ENCODE measurements at regions of chr7 and their contacts with region 1.

Region 1: GRCh38 chr7:26043801-26044200 is 108.2 kb upstream of the NFE2L3 start:
- DNase-seq: no peak
- ATAC-seq: no peak
- H3K4me3 ChIP-seq: no peak overlapping the region
- H3K4me3 Mint-ChIP-seq: no peak overlapping the region
- H3K27ac ChIP-seq: no peak overlapping the region
- H3K27ac Mint-ChIP-seq: no peak overlapping the region
- H3K4me1 ChIP-seq: no peaks in the 10 kb centered on the region
- H3K4me1 Mint-ChIP-seq: no peaks in the 10 kb centered on the region
- H3K27me3 ChIP-seq: peaks cover 8 to 10% of the 10 kb centered on the region in 2 experiments
- H3K27me3 Mint-ChIP-seq: peaks cover 25% of the 10 kb centered on the region
- CTCF ChIP-seq: no peak

Region 2: DNA sequence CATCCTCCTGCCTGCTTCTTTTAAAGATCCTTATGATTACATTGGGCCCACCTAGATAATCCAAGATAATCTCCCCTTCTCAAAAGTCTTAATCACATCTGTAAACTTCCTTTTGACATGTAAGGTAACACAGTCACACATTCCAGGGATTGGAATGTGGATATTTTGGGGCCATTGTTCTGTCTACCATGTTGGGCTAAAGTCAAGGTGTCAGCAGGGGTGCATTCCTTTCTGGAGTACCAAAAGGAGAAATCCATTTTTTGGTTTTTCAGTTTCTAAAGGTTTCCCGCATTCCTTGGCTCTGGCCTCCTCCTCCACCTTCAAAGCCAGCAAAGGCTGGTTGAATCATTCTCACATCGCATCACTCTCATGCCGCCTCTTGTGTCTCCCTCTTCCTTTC is 89.4 kb before region 1 on chr7:
- CTCF ChIA-PET with region 1: no interaction called
- POLR2A ChIA-PET with region 1: no interaction called
- intact Hi-C with region 1: no loop called
- DNase-seq: no peak
- ATAC-seq: no peak
- H3K4me3 ChIP-seq: no peak overlapping the region
- H3K4me3 Mint-ChIP-seq: no peak overlapping the region
- H3K27ac ChIP-seq: no peak overlapping the region
- H3K27ac Mint-ChIP-seq: no peak overlapping the region
- H3K4me1 ChIP-seq: peaks cover 19% of the 10 kb centered on the region
- H3K4me1 Mint-ChIP-seq: peaks cover 26% of the 10 kb centered on the region
- H3K27me3 ChIP-seq: no peaks in the 10 kb centered on the region
- H3K27me3 Mint-ChIP-seq: no peaks in the 10 kb centered on the region
- CTCF ChIP-seq: no peak

Region 3: DNA sequence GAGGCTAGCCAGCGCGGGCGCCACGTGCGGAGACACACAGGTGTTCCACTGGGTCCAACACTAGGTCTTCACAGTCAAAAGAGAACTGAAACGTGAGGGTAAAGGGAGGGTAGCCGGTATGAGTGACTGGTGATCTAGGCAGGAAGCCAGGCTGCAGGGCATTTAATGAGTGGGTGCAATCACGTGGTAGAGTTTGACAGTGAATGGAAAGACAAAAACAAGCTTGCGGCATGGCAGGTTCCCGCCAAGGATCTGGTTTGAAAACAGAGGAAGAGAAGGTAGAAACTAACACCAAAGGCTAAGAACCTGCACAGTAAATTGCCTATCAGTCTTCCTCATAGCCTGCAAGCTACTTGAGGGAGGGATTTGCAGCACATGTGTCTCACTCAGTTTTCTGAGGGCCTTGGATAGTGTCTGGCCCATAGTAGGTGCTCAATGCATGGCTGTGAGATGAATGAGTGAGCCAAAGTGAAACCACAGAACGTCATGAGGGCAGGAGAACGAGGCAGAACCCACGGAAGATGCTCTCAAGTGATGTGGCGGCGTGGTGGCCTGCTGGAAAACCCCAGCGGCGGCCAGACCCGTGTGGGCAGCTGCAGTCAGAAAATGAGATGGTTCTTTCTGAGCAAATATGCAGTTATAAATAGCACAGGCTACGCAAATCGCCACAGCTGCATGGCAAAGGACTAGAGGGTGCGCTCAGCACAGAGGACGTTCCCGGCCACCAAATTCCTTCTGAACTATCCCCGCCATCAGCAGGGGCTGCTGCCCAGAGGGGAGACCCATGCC is 75.4 kb before region 1 on chr7:
- CTCF ChIA-PET with region 1: no interaction called
- POLR2A ChIA-PET with region 1: no interaction called
- intact Hi-C with region 1: loop called in 1 of 2 experiments (anchors 5 kb)
- DNase-seq: peak in 4 of 14 experiments; percentile 25 to 72 (median 49)
- ATAC-seq: peak; percentile 46
- H3K4me3 ChIP-seq: peak overlapping the region; percentile 24
- H3K4me3 Mint-ChIP-seq: peak overlapping the region; percentile 46
- H3K27ac ChIP-seq: no peak overlapping the region
- H3K27ac Mint-ChIP-seq: no peak overlapping the region
- H3K4me1 ChIP-seq: peaks cover 19% of the 10 kb centered on the region
- H3K4me1 Mint-ChIP-seq: peaks cover 19% of the 10 kb centered on the region
- H3K27me3 ChIP-seq: peaks cover 0 to 17% of the 10 kb centered on the region in 2 experiments
- H3K27me3 Mint-ChIP-seq: peaks cover 56% of the 10 kb centered on the region
- CTCF ChIP-seq: no peak